ENCODE measurements at regions of chr19 and their contacts with region 1.

Region 1: GRCh38 chr19:40165362-40165937 is 25.8 kb upstream of the MAP3K10 start:
- DNase-seq: peak; percentile 47
- H3K4me3 ChIP-seq: no peak overlapping the region
- H3K27ac ChIP-seq: no peak overlapping the region
- H3K4me1 ChIP-seq: no peaks in the 10 kb centered on the region
- H3K27me3 ChIP-seq: no peaks in the 10 kb centered on the region
- CTCF ChIP-seq: peak; percentile 60 to 79
- POLR2A ChIP-seq: no peak

Region 2: DNA sequence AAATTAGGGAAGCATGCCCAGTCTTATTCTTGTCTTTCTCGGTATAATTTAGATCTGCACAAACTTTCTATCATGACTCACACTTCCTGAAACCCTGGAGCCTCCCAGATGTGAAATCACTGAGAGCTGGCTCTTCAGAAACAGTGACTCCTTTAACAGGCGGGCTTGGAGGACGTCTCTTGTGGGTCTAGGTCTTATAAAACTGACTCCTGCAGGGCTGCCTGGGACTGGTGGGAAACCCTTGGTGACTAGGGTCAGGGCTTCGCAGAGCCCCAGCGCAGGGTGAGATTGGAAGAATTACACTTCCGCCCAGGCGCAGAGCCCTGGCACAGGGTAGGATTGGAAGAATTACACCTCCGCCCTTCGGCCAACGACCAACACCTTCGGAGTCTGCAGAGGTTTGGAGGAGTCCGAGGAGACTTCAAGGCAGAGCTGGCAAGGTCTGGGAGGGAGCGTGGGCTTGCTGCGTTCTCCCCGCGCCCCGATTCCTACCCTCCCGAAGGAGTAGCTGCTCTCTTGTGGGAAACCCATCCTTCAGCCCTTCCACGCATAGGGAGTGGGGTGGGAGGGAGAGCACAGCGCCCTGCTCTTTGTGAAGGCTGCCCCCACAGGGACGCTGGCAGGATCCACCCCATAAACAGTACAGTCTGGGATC is 17.6 kb before region 1 on chr19:
- CTCF ChIA-PET with region 1: interaction called, 15 read pairs
- POLR2A ChIA-PET with region 1: no interaction called
- dilution Hi-C with region 1: no loop called
- intact Hi-C with region 1: no loop called
- DNase-seq: peak; percentile 45
- H3K4me3 ChIP-seq: no peak overlapping the region
- H3K27ac ChIP-seq: no peak overlapping the region
- H3K4me1 ChIP-seq: peaks cover 8% of the 10 kb centered on the region
- H3K27me3 ChIP-seq: no peaks in the 10 kb centered on the region
- CTCF ChIP-seq: no peak
- POLR2A ChIP-seq: no peak

Measured in endothelial cell of umbilical vein (primary cell).